Activated T-helper 1 cell treated with anti-CD3 and anti-CD28 coated beads, Interleukin-12 subunit alpha, Interleukin-12 subunit beta, Interleukin-2, Interleukin-4 antibody, amounts not matched to agents 30 ng/mL and 10 ng/mL and 1 ng/mL, durations not matched to agents 14 hours and 24 hours and 36 hours (primary cell): ENCODE measurements at regions of chr1 and their contacts with region 1.

Region 1: GRCh38 chr1:7470880-7471638 is 300.0 kb upstream of the VAMP3 start:
- DNase-seq: no peak
- H3K4me3 Mint-ChIP-seq: no peak overlapping the region
- H3K27ac Mint-ChIP-seq: no peak overlapping the region
- H3K4me1 Mint-ChIP-seq: no peaks in the 10 kb centered on the region
- H3K27me3 Mint-ChIP-seq: no peaks in the 10 kb centered on the region

Region 2: DNA sequence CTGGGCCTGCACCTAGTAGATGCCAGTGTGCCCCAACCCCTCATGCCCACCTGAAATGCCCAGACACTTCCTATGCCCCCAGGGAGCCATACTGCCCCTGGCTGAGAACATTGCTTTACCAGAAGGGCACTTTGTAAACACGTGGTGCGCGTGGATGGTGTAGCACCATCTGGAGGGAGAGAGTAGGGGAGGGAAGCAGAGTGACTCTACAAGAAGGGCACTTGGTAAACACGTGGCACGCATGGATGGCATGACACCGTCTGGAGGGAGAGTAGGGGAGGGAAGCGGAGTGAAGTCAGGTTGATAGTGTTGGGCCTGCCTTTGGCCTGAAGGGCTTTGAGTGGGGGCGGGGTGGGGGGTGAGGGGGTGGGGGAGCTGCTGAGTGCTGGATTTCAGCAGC is 24.0 kb before region 1 on chr1:
- intact Hi-C with region 1: no loop called
- DNase-seq: no peak
- H3K4me3 Mint-ChIP-seq: no peak overlapping the region
- H3K27ac Mint-ChIP-seq: no peak overlapping the region
- H3K4me1 Mint-ChIP-seq: no peaks in the 10 kb centered on the region
- H3K27me3 Mint-ChIP-seq: peaks cover 1% of the 10 kb centered on the region

Region 3: GRCh38 chr1:7538033-7538432 is 67.0 kb after region 1 on chr1:
- intact Hi-C with region 1: no loop called
- DNase-seq: no peak
- H3K4me3 Mint-ChIP-seq: no peak overlapping the region
- H3K27ac Mint-ChIP-seq: no peak overlapping the region
- H3K4me1 Mint-ChIP-seq: no peaks in the 10 kb centered on the region
- H3K27me3 Mint-ChIP-seq: no peaks in the 10 kb centered on the region

Region 4: DNA sequence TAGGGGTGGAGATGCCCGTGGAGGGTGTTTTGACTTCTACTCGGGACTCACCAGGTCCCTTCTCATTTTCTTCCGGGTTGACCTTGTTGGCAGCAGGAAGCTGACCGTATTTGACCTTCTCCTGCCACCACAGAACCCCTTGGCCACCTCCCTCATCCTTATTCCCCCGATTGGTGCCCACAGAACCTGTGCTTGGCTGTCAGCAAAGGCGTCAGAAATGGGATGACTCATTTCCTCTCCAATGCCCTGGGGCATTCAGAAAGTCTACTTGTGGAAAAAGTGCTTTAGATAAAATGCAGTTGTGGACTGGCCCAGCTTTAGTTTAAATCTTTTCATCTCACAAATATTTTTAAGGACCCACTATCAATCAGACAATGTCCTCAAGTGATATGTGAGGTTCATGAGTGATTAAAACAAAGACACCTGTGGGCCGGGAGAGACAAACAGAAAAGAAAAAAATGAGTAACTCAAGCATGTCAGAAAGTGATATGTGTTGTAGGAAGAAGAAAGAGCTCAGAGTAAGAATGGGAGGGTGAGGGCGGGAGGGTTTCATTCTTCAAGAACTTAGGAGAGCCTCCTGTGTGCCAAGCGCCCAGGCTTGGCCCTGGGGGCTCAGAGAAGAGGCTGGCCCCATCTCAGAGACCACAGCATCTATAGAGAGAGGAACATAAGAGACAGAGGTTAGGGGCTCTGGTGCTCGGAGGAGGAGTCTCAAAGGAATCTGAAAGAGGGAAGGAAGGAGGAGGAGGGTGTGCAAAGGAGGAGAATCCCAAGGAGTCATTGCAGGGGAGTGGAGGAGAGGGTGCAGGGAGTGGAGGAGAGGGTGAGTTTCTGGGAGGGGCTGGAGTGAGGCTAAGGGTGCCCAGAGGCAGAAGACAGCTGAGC is 78.5 kb after region 1 on chr1:
- intact Hi-C with region 1: loop called (anchors 2 kb)
- DNase-seq: peak; percentile 28
- H3K4me3 Mint-ChIP-seq: peak overlapping the region; percentile 27
- H3K27ac Mint-ChIP-seq: peak overlapping the region; percentile 75
- H3K4me1 Mint-ChIP-seq: peaks cover 9% of the 10 kb centered on the region
- H3K27me3 Mint-ChIP-seq: peaks cover 5% of the 10 kb centered on the region